MCF 10A (cell line): ENCODE measurements at regions of chr22 and their contacts with region 1.

Region 1: DNA sequence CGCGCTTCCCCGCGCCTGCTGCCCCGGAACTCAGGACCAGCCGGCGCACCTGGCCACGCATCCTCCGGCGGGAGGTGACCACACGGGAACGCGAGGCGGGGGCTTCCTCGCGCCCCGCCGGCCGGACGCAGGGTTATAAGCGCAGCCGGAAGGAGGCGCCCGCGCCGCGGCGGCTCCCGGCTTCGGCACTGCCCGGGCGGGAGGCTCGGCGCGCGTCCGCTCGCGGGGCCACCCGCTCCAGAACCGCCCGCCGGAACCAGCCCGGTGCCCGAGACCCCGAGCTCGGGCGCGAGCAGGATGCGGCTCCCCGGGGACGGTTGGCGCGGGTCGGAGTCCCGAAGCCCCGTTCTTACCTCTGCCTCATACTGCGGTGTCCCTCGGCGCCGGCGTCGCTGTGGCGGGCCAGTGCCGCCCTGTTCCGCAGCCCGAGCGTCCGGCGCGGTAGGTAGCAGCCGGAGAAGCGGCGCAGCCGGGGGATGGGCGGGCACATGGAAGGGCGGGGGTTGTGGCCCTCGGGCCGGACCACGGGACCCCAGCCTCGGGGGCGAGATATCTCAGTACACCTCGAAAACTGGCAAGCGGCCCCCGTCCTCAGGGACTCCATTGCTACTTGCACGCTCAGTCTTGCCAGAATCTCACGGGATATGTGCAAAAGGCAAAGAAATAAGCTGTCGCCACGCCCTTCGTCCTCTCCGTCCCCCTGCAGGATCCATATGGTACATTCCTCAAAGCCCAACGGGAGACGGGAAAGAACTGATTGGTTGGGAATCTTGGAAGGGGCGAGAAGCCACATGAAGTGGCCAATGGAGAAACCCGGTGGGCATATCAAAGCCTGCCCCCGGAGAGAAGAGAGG is 23.1 kb downstream of the MICAL3 start:
- DNase-seq: peak; percentile 98
- H3K4me3 Mint-ChIP-seq: peak overlapping the region; percentile 92
- H3K27ac Mint-ChIP-seq: peak overlapping the region; percentile 99
- H3K4me1 Mint-ChIP-seq: peaks cover 31% of the 10 kb centered on the region
- H3K27me3 Mint-ChIP-seq: no peaks in the 10 kb centered on the region
- CTCF ChIP-seq: peak; percentile 48

Region 2: GRCh38 chr22:17910561-17911311 is 90.5 kb before region 1 on chr22:
- CTCF ChIA-PET with region 1: interaction called, 3 read pairs
- POLR2A ChIA-PET with region 1: no interaction called
- intact Hi-C with region 1: loop called (anchors 10 kb)
- DNase-seq: peak; percentile 66
- H3K4me3 Mint-ChIP-seq: no peak overlapping the region
- H3K27ac Mint-ChIP-seq: peak overlapping the region; percentile 11
- H3K4me1 Mint-ChIP-seq: peaks cover 20% of the 10 kb centered on the region
- H3K27me3 Mint-ChIP-seq: no peaks in the 10 kb centered on the region
- CTCF ChIP-seq: no peak

Region 3: GRCh38 chr22:17931400-17931825 is 69.9 kb before region 1 on chr22:
- CTCF ChIA-PET with region 1: no interaction called
- POLR2A ChIA-PET with region 1: no interaction called
- intact Hi-C with region 1: no loop called
- DNase-seq: peak; percentile 49
- H3K4me3 Mint-ChIP-seq: no peak overlapping the region
- H3K27ac Mint-ChIP-seq: no peak overlapping the region
- H3K4me1 Mint-ChIP-seq: peaks cover 27% of the 10 kb centered on the region
- H3K27me3 Mint-ChIP-seq: no peaks in the 10 kb centered on the region
- CTCF ChIP-seq: no peak

Region 4: DNA sequence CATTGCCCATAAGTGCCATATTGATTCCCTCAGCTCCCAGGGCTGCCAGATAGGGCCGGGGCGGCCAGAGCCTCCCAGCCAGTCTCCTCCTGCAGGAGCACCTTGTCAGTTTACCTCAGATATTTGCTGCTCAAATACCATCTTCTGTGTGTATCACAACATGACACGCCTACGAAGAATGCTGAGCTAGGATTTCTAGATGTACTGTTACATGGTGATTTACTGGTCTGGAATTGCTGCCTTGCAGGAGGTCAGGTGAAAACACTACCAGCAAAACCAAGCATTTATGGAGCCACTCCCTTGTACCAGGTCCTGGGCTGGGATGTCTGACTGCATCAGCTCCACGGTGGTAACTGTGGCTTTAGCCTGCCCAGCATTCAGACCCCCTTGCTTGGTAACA is 11.3 kb after region 1 on chr22:
- CTCF ChIA-PET with region 1: interaction called, 19 read pairs
- POLR2A ChIA-PET with region 1: interaction called, 54 read pairs
- intact Hi-C with region 1: no loop called
- DNase-seq: no peak
- H3K4me3 Mint-ChIP-seq: no peak overlapping the region
- H3K27ac Mint-ChIP-seq: peak overlapping the region; percentile 41
- H3K4me1 Mint-ChIP-seq: peaks cover 22% of the 10 kb centered on the region
- H3K27me3 Mint-ChIP-seq: no peaks in the 10 kb centered on the region
- CTCF ChIP-seq: no peak

Region 5: DNA sequence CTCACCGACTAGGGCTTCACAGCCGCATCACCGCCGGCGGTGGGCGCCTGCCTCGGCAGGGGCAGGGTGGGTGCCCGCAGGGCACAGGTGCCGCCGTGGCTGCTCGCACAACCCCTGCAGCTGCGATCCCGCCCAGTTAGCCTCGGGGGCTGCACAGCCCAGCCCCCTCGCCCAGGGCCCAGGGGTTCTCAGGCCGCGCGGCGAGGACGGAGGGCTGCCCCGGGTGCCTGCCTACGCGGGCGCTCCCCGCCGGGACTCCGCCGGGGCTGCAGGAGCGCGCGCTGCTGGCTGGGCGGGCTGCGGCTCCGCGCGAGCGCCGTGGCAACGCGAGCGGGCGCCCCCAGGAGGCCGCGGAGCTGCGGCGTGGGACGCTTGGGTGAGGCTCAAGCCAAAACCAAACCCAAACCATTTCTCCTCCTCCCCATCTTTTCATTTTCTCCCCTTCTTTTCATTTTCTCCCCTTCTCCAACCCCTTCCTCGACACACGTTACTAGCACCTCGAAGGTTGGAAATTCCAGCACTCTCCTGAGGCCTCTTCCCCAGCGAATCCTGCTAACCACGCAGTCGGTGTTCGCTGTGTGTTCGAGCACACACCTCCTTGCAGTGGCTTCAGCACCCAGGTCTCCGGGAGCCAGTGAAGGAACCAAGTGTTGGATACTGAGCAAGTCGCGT is 23.1 kb after region 1 on chr22 and contains the start of gene MICAL3:
- CTCF ChIA-PET with region 1: interaction called, 11 read pairs
- POLR2A ChIA-PET with region 1: interaction called, 59 read pairs
- intact Hi-C with region 1: loop called (anchors 2 kb)
- DNase-seq: peak; percentile 66
- H3K4me3 Mint-ChIP-seq: peak within 1 kb of the TSS; percentile 85
- H3K27ac Mint-ChIP-seq: peak within 1 kb of the TSS; percentile 17
- H3K4me1 Mint-ChIP-seq: peaks cover 21% of the 10 kb centered on the region
- H3K27me3 Mint-ChIP-seq: no peaks in the 10 kb centered on the region
- CTCF ChIP-seq: peak; percentile 53
- total RNA-seq, gene MICAL3: 54.1 and 62.1 TPM in 2 replicates

Region 6: GRCh38 chr22:18031695-18032454 is 30.6 kb after region 1 on chr22:
- CTCF ChIA-PET with region 1: interaction called, 8 read pairs
- POLR2A ChIA-PET with region 1: interaction called, 6 read pairs
- intact Hi-C with region 1: loop called (anchors 2 kb)
- DNase-seq: peak; percentile 98
- H3K4me3 Mint-ChIP-seq: peak overlapping the region; percentile 12
- H3K27ac Mint-ChIP-seq: peak overlapping the region; percentile 37
- H3K4me1 Mint-ChIP-seq: peaks cover 56% of the 10 kb centered on the region
- H3K27me3 Mint-ChIP-seq: no peaks in the 10 kb centered on the region
- CTCF ChIP-seq: no peak